Heart left ventricle (tissue), 16 donors: ENCODE measurements at regions of chr16 and their contacts with region 1.

Region 1: GRCh38 chr16:67226804-67227557 is at the start of gene TMEM208:
- DNase-seq: peak; percentile 98 to 99 (median 99)
- ATAC-seq: peak; percentile 95 to 98 (median 96)
- H3K4me3 ChIP-seq: peak within 1 kb of the TSS; percentile 55 to 97 (median 84)
- H3K27ac ChIP-seq: peak within 1 kb of the TSS; percentile 66 to 94 (median 90)
- H3K4me1 ChIP-seq: peaks cover 2 to 32% (median 17%) of the 10 kb centered on the region in 12 donors
- H3K27me3 ChIP-seq: no peaks in the 10 kb centered on the region
- CTCF ChIP-seq: peak in 6 of 12 donors; percentile 1 to 39 (median 13)
- POLR2A ChIP-seq: peak in 1 of 2 donors; percentile 70
- total RNA-seq, gene TMEM208: 6.2 to 21.8 (median 11.9) TPM

Region 2: GRCh38 chr16:67191995-67192681 is 34.8 kb before region 1 on chr16 and contains the start of gene E2F4:
- intact Hi-C with region 1: loop called in 4 of 10 experiments (anchors 5 kb)
- DNase-seq: peak; percentile 93 to 95 (median 93)
- ATAC-seq: peak; percentile 88 to 96 (median 92)
- H3K4me3 ChIP-seq: peak within 1 kb of the TSS; percentile 74 to 100 (median 94)
- H3K27ac ChIP-seq: peak within 1 kb of the TSS; percentile 65 to 93 (median 88)
- H3K4me1 ChIP-seq: peaks cover 2 to 40% (median 29%) of the 10 kb centered on the region in 12 donors
- H3K27me3 ChIP-seq: no peaks in the 10 kb centered on the region
- CTCF ChIP-seq: peak in 1 of 12 donors; percentile 6
- POLR2A ChIP-seq: peak in 1 of 2 donors; percentile 88
- total RNA-seq, gene E2F4: 25.2 to 71.3 (median 33.7) TPM